ENCODE measurements at regions of chr7 and their contacts with region 1.

Region 1: DNA sequence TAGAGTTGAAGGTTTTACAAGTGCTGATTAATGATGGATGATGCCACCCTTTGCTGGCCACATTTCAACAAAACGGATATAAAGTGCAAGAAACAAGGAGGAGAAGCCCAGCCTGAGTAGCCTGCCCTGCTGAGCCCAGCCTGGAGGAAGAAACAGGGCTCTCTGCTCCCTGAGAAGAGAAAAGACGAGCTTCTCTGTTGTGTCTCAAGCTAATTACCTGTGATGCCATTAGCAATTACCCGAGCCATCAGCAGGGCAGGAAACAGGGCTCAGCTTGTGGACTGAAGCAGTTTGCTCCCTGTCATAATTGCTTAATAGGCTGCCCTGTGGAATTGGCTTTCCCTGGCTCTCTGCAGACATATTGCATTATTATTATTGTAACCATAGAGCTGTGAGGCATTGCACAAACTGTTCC is 709.3 kb upstream of the AUTS2 start:
- DNase-seq: no peak

Region 2: GRCh38 chr7:67518580-67518979 is 1370.4 kb before region 1 on chr7:
- intact Hi-C with region 1: loop called in 1 of 2 experiments (anchors 10 kb)
- DNase-seq: no peak